IMR-90 (cell line): ENCODE measurements at regions of chr5 and their contacts with region 1.

Region 1: DNA sequence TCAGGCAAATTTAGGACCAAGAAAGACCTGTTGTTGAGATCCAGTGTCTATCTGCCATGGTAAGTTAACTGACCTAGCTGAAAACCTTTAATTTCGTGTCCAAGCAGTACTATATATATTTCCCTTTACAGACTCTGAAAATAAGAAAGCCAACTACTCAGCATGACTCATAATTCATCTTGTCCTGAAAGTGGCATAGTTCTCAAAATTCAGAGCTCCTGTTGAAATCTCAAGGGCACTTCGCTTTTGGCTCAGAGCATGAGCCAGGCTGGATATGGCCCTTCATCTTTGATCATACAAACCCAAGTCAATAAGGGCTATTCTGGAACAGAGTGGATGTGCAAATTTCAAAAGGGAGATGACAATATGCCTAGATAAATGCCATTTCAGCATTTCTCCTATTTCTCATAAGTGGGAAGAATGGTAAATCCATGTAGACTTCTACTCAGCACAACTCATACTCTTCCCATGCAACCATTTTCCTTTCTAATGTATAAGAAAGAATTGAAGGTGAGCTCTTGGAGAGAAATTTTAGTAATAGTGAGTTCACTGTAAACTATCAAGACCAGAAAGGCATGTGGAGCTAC is 567.9 kb upstream of the DAB2 start:
- DNase-seq: no peak
- ATAC-seq: no peak
- H3K4me3 ChIP-seq: no peak overlapping the region
- H3K27ac ChIP-seq: no peak overlapping the region
- H3K4me1 ChIP-seq: no peaks in the 10 kb centered on the region
- H3K27me3 ChIP-seq: no peaks in the 10 kb centered on the region; the same call in 1 of the 2 replicates
- CTCF ChIP-seq: no peak
- POLR2A ChIP-seq: no peak
- RAD21 ChIP-seq: no peak

Region 2: GRCh38 chr5:39513236-39513635 is 479.5 kb before region 1 on chr5:
- CTCF ChIA-PET with region 1: no interaction called
- POLR2A ChIA-PET with region 1: interaction called, 13 read pairs
- dilution Hi-C with region 1: no loop called
- in situ Hi-C with region 1: no loop called
- intact Hi-C with region 1: no loop called
- DNase-seq: peak; percentile 6
- ATAC-seq: no peak
- H3K4me3 ChIP-seq: no peak overlapping the region
- H3K27ac ChIP-seq: no peak overlapping the region
- H3K4me1 ChIP-seq: peaks cover 2% of the 10 kb centered on the region; the same call in 1 of the 2 replicates
- H3K27me3 ChIP-seq: no peaks in the 10 kb centered on the region
- CTCF ChIP-seq: no peak
- POLR2A ChIP-seq: no peak
- RAD21 ChIP-seq: no peak

Region 3: GRCh38 chr5:39977066-39977655 is 15.5 kb before region 1 on chr5:
- CTCF ChIA-PET with region 1: no interaction called
- POLR2A ChIA-PET with region 1: no interaction called
- dilution Hi-C with region 1: no loop called
- in situ Hi-C with region 1: no loop called
- intact Hi-C with region 1: no loop called
- DNase-seq: no peak
- ATAC-seq: no peak
- H3K4me3 ChIP-seq: no peak overlapping the region
- H3K27ac ChIP-seq: no peak overlapping the region
- H3K4me1 ChIP-seq: no peaks in the 10 kb centered on the region
- H3K27me3 ChIP-seq: no peaks in the 10 kb centered on the region; the same call in 1 of the 2 replicates
- CTCF ChIP-seq: no peak
- POLR2A ChIP-seq: no peak
- RAD21 ChIP-seq: no peak